Psoas muscle (tissue), 8 donors: ENCODE measurements at regions of chr1 and their contacts with region 1.

Region 1: DNA sequence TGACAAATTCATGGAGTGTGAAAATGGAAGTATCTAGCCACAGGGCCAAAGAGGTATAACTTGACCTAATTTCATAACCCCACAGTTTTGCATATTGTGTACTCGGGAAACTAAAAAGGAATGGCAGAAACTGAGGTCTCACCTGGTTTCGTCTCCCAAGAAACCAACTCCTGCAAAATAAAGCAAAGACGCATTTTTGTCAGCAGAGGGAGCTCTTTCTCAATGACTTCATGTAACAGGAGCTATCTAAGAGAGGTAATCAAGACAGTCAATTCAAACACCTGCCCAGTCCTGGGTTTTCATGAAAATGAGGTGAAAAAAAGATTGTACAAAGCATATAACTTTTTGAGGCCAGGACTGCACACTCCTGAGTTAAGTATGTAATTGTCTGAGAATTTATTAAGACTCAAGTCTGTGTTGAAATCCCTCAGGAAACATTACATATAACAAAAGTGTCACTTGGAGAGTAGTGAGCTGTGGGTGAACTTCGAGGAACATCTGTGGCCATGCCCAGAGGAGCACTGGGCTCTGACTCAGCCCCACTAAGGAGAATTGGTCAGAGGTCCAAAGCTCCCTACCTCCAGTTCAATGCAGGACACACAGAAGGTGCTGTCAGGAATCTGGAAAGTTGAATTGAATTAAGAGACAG is 17.6 kb downstream of the FCRL4 start:
- DNase-seq: no peak
- ATAC-seq: no peak
- H3K4me3 ChIP-seq: no peak overlapping the region
- H3K27ac ChIP-seq: no peak overlapping the region
- H3K4me1 ChIP-seq: no peaks in the 10 kb centered on the region
- H3K27me3 ChIP-seq: peaks cover 0 to 2% (median 0%) of the 10 kb centered on the region in 3 donors
- CTCF ChIP-seq: peak; percentile 54

Region 2: DNA sequence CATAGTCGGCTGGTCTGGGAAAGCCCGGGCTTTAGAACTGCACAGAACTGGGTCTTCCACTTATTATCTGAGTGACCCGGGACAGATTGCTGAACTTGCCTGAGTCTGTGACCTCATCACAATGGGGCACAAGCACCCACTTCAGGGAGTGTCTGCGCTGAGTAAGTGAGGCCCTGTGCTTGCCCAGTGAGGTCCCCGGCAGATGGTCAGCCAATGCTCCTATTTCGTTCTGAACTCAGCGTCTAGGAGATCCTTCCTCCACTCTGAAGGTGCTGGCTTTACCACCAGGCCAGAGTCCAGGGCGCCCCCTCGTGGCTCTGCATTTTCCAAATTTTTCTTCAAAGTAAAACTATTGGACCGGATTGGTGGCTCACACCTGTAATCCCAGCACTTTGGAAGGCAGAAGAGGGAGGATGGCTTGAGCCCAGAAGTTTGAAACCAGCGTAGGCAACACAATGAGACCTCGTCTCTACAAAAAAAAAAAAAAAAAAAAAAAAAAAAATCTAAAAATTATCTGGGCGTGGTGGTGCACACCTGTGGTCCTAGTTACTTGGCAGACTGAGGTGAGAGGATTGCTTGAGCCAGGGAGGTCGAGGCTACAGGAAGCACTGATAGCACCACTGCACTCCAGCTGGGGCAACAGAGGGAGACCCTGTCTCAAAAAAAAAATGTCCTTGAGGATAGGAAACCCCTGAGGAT is 89.7 kb before region 1 on chr1:
- intact Hi-C with region 1: no loop called
- DNase-seq: peak; percentile 35 to 59
- ATAC-seq: peak in 1 of 4 donors; percentile 19
- H3K4me3 ChIP-seq: no peak overlapping the region
- H3K27ac ChIP-seq: no peak overlapping the region
- H3K4me1 ChIP-seq: no peaks in the 10 kb centered on the region
- H3K27me3 ChIP-seq: no peaks in the 10 kb centered on the region
- CTCF ChIP-seq: peak; percentile 36

Region 3: DNA sequence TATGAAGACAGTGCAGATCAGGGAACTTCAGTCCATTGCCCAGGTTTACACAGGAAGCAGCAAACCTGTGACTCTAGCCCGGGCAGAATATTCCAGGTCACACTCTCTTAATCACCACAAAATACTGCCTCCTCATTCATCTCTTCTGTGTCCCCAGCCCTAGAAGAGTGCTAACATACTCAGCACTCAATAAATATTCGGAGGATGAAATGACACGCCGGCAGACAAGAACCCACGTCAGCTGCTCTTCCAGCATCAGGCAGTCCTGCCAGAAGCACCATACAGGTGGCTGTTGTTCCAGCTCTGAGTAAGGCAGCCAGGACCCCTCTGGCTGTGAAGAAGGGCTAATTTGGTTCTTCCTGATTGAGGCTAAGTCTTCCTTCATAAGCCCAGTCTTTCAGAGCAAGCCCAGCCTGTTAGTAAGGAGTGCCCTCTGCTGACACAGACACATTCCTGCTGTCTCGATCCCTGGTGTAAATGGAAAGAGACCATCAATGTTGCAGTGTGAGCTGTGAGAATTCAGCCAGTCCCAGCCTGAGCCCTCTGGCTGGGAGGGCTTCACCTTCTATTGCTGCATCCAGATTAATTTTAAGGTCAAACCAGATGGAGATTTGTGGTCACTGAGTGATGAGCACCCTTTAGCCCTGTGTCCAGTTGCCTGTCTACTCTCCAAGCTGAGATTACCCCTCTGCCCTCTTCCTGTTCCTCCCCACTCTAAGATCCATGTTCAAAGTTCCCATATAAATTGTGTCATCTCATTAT is 368.2 kb after region 1 on chr1:
- intact Hi-C with region 1: loop called in 1 of 2 experiments (anchors 5 kb)
- DNase-seq: no peak
- ATAC-seq: no peak
- H3K4me3 ChIP-seq: no peak overlapping the region
- H3K27ac ChIP-seq: no peak overlapping the region
- H3K4me1 ChIP-seq: no peaks in the 10 kb centered on the region
- H3K27me3 ChIP-seq: no peaks in the 10 kb centered on the region
- CTCF ChIP-seq: no peak